ENCODE measurements at regions of chr2 and their contacts with region 1.

Region 1: DNA sequence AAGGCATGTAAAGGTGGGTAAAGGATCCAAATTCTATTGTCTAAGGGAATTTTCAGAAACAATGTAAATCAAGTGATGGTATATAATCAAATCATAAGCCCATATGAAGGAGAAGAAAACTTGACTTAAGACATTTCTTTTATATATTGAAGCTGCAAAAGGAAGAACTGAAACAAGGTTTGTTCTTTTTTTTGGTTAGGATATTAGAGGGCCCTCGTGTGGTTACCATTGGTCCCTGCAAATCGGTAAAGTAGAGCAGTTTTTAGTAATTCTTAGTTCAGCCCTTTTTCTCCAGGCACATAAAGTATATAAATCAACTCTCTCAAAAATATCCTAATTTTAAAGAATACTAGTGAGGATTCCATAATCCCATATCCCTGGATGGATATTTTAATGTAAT is 105.6 kb upstream of the STK17B start:
- DNase-seq: no peak
- ATAC-seq: peak; percentile 48
- H3K4me3 ChIP-seq: no peak overlapping the region
- H3K27ac ChIP-seq: no peak overlapping the region
- H3K4me1 ChIP-seq: peaks cover 27% of the 10 kb centered on the region
- H3K27me3 ChIP-seq: no peaks in the 10 kb centered on the region
- CTCF ChIP-seq: peak; percentile 61 to 72 (median 66); a peak in 5 of 6 replicates
- EP300 ChIP-seq: no peak
- POLR2A ChIP-seq: no peak
- RAD21 ChIP-seq: peak; percentile 82

Region 2: DNA sequence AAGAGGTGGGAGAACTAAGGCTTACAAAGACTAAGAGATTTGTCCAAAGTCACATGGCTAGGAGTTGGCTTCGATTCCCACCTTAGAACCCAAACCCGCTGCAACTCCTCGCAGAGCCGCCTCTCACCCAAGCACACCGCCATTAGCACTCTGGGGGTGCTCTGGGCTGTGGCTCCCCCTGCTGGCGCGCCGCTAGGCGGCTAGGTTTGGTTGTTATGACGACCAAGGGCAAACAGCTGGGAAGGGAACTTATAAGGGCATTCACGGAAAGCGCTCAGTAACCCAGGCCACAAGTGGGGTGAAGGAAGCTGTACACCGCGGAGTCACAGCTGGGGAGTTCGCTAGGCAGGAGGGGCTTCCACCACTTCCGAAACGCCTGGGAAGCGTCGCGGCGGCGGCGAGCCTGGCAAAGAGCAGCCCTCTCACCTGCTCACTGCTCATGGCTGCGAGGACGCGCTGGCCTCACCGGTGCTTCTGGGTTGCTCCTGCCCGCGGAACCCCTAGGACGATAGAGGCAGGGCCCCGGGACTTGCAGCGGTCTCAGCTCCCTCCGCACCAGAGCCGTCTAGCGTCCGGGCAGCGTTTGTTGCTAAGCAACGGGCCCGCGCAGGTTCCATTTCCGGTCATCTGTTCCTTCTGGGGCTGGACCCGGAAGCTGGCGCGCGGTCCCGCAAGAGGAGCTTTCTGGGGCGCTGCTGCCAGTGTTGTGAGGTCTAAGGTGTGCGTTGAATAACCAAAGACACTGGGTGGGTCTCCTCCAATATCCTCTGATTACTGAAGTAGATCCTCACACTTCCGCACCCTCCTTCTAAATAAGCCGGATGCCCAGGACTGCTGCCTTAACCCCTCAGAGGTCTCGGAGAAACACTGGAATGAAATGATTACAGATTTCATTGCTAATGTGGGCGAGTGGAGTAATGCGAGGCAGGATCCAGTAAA is 208.5 kb before region 1 on chr2 and contains the start of gene DNAH7:
- CTCF ChIA-PET with region 1: interaction called, 24 read pairs
- POLR2A ChIA-PET with region 1: interaction called, 7 read pairs
- RAD21 ChIA-PET with region 1: interaction called, 19 read pairs
- SMC1A ChIA-PET with region 1: interaction called, 248 read pairs
- in situ Hi-C with region 1: no loop called
- intact Hi-C with region 1: no loop called
- DNase-seq: peak; percentile 64
- ATAC-seq: peak; percentile 98
- H3K4me3 ChIP-seq: peak within 1 kb of the TSS; percentile 68
- H3K27ac ChIP-seq: peak within 1 kb of the TSS; percentile 43
- H3K4me1 ChIP-seq: no peaks in the 10 kb centered on the region; the same call in 1 of the 2 replicates
- H3K27me3 ChIP-seq: no peaks in the 10 kb centered on the region
- CTCF ChIP-seq: peak; percentile 91 to 98 (median 97); a peak in 5 of 6 replicates
- EP300 ChIP-seq: no peak; a peak in 1 of 4 replicates
- POLR2A ChIP-seq: peak; percentile 22; the same call in 1 of the 2 replicates
- RAD21 ChIP-seq: peak; percentile 92
- polyA plus RNA-seq, gene DNAH7: 0.05 to 0.14 TPM

Region 3: GRCh38 chr2:196113061-196113974 is 163.7 kb before region 1 on chr2:
- CTCF ChIA-PET with region 1: no interaction called
- POLR2A ChIA-PET with region 1: interaction called, 10 read pairs
- RAD21 ChIA-PET with region 1: interaction called, 3 read pairs
- SMC1A ChIA-PET with region 1: interaction called, 16 read pairs
- in situ Hi-C with region 1: no loop called
- intact Hi-C with region 1: no loop called
- DNase-seq: no peak
- ATAC-seq: no peak
- H3K4me3 ChIP-seq: no peak overlapping the region
- H3K27ac ChIP-seq: no peak overlapping the region
- H3K4me1 ChIP-seq: 0 out of 2 replicates have a peak, but pooled peaks cover 2% of the 10 kb centered on the region
- H3K27me3 ChIP-seq: no peaks in the 10 kb centered on the region
- CTCF ChIP-seq: no peak
- EP300 ChIP-seq: no peak
- POLR2A ChIP-seq: no peak
- RAD21 ChIP-seq: no peak

Region 4: GRCh38 chr2:196171248-196171871 is 105.6 kb before region 1 on chr2 and contains the start of gene STK17B:
- CTCF ChIA-PET with region 1: interaction called, 24 read pairs
- POLR2A ChIA-PET with region 1: interaction called, 27 read pairs
- RAD21 ChIA-PET with region 1: interaction called, 95 read pairs
- SMC1A ChIA-PET with region 1: interaction called, 57 read pairs
- in situ Hi-C with region 1: loop called (anchors 25 kb)
- intact Hi-C with region 1: loop called (anchors 2 kb)
- DNase-seq: peak; percentile 82
- ATAC-seq: peak; percentile 64
- H3K4me3 ChIP-seq: peak within 1 kb of the TSS; percentile 98
- H3K27ac ChIP-seq: peak within 1 kb of the TSS; percentile 87
- H3K4me1 ChIP-seq: peaks cover 15% of the 10 kb centered on the region
- H3K27me3 ChIP-seq: no peaks in the 10 kb centered on the region
- CTCF ChIP-seq: no peak
- EP300 ChIP-seq: 0 out of 4 replicates have a peak, but pooled peaks of 1 of the 2 experiments have one; percentile 34
- POLR2A ChIP-seq: peak; percentile 99
- RAD21 ChIP-seq: peak; percentile 16; the same call in 1 of the 2 replicates
- polyA plus RNA-seq, gene STK17B: 21.2 to 28.2 TPM

Region 5: DNA sequence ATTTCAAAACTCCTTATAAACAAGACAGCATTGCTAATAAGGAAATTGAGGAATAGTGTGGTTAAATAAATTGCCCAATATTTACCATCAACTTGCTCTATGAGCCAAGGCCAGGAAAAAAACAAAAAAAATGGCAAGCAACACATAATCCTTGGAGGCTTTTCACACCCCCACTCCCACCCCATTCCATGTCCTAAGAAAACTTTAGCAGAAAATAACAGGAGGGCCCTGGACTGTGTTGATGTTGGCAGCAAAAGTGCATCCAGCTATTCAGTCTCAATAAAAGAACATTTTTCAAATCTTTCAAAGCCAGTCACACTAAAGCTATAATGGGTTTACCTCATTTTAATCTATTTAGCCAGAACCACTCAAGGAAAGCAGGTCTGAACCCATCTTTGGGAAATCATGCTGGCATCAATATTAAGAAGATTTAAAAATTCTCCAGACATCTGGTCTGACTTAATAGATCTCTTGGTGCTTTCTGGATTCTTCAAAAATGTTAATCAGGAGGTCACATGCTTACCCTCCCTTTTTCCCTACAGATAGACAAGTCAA is 71.0 kb before region 1 on chr2:
- CTCF ChIA-PET with region 1: interaction called, 8 read pairs
- POLR2A ChIA-PET with region 1: interaction called, 4 read pairs
- RAD21 ChIA-PET with region 1: interaction called, 21 read pairs
- SMC1A ChIA-PET with region 1: interaction called, 26 read pairs
- in situ Hi-C with region 1: no loop called
- intact Hi-C with region 1: no loop called
- DNase-seq: no peak
- ATAC-seq: no peak
- H3K4me3 ChIP-seq: no peak overlapping the region
- H3K27ac ChIP-seq: no peak overlapping the region
- H3K4me1 ChIP-seq: peaks cover 22% of the 10 kb centered on the region
- H3K27me3 ChIP-seq: no peaks in the 10 kb centered on the region
- CTCF ChIP-seq: no peak
- EP300 ChIP-seq: no peak
- POLR2A ChIP-seq: no peak
- RAD21 ChIP-seq: no peak

Region 6: GRCh38 chr2:196249860-196250259 is 27.1 kb before region 1 on chr2:
- CTCF ChIA-PET with region 1: interaction called, 11 read pairs
- POLR2A ChIA-PET with region 1: interaction called, 9 read pairs
- RAD21 ChIA-PET with region 1: interaction called, 102 read pairs
- SMC1A ChIA-PET with region 1: interaction called, 62 read pairs
- in situ Hi-C with region 1: no loop called
- intact Hi-C with region 1: no loop called
- DNase-seq: no peak
- ATAC-seq: peak; percentile 92
- H3K4me3 ChIP-seq: no peak overlapping the region
- H3K27ac ChIP-seq: no peak overlapping the region
- H3K4me1 ChIP-seq: peaks cover 4% of the 10 kb centered on the region
- H3K27me3 ChIP-seq: no peaks in the 10 kb centered on the region
- CTCF ChIP-seq: no peak
- EP300 ChIP-seq: no peak; a peak in 1 of 4 replicates
- POLR2A ChIP-seq: no peak
- RAD21 ChIP-seq: peak; percentile 10; the same call in 1 of the 2 replicates

Region 7: DNA sequence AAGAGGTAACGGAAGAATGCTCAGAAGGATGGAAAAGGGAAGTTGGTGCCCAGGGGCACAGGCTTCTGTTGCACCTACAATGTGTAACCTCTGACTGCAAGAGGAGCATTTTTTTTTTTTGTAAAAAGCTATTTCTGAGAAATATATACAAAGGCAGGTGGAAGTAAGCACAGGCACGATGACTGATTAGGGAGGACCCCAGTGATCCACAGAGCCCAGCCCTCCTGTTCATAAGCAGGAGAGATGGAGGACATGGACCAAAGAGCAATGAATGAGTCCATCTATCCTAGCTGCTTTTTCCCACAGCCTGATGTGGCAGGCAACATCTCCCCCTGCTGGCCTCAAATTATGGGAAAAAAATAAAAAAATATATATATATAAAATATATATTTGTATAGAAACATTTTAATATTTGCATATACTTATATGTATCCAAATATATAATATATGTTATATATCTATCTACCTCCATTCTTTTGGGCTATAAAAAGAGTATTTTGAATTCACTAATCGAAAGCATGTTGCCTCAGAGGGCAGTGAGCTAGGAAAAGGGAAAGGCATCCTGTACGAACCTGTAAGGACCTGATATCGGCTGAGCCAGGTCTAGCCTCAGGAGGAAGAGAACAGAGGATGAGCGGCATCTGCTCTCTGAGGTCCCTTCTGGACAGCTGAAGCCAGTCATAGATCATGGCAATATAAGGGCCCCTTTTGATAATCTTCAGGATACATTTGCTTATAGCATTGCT is 60.4 kb after region 1 on chr2:
- CTCF ChIA-PET with region 1: interaction called, 18 read pairs
- POLR2A ChIA-PET with region 1: no interaction called
- RAD21 ChIA-PET with region 1: interaction called, 6 read pairs
- SMC1A ChIA-PET with region 1: interaction called, 5 read pairs
- in situ Hi-C with region 1: no loop called
- intact Hi-C with region 1: no loop called
- DNase-seq: no peak
- ATAC-seq: peak; percentile 67
- H3K4me3 ChIP-seq: no peak overlapping the region
- H3K27ac ChIP-seq: peak overlapping the region; percentile 48
- H3K4me1 ChIP-seq: peaks cover 7% of the 10 kb centered on the region; the same call in 1 of the 2 replicates
- H3K27me3 ChIP-seq: no peaks in the 10 kb centered on the region
- CTCF ChIP-seq: peak in 2 of 3 experiments; percentile 28 to 40; a peak in 3 of 6 replicates
- EP300 ChIP-seq: no peak
- POLR2A ChIP-seq: no peak
- RAD21 ChIP-seq: peak; percentile 52

Measured in GM12878 (cell line).